Heart left ventricle (tissue), 16 donors: ENCODE measurements at regions of chr6 and their contacts with region 1.

Region 1: DNA sequence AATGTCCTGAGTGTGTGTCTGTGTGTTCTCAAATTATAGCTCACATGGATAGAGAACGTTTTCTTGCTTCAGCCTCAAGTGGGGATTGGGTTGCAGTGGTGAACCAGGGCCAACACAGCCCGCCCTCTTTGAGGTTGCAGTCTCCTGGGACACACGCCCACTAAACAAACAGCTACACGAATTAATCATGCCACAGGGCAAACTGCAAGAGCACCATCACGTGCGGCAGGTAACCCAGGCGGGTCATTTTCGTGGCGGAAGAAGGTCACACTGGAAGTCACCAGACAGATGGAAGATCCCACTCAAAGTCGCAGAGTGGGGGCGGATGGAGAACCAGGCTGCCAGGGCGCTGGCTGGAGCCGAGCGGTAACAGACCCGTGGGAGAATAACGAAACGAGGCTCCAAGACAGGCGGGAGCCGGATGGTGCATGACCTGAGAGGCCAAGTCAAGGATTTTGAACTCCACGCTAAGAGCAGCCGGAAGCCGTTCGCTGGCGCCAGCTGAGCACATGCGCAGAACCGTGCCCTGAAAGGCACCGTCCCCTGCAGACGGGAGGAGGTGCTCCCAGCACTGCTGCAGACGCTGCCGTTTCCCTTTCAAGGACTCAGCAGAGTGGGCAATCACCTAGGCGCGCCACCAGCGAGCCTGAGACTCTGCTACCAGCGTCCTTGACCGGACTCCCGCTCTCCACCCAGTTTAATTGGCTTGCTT is 10.7 kb downstream of the DLL1 start:
- DNase-seq: peak in 3 of 5 donors; percentile 74 to 81 (median 76)
- ATAC-seq: peak; percentile 32 to 75 (median 58)
- H3K4me3 ChIP-seq: peak overlapping the region in 8 of 12 donors; percentile 4 to 51 (median 32)
- H3K27ac ChIP-seq: peak overlapping the region in 8 of 12 donors; percentile 23 to 73 (median 58)
- H3K4me1 ChIP-seq: peaks cover 7 to 58% (median 34%) of the 10 kb centered on the region in 12 donors
- H3K27me3 ChIP-seq: no peaks in the 10 kb centered on the region
- CTCF ChIP-seq: peak in 1 of 12 donors; percentile 12
- POLR2A ChIP-seq: no peak

Region 2: GRCh38 chr6:170049641-170050561 is 230.2 kb before region 1 on chr6:
- intact Hi-C with region 1: loop called in 1 of 10 experiments (anchors 10 kb)
- DNase-seq: peak; percentile 70 to 94 (median 88)
- ATAC-seq: peak; percentile 83 to 91 (median 91)
- H3K4me3 ChIP-seq: no peak overlapping the region
- H3K27ac ChIP-seq: peak overlapping the region in 11 of 12 donors; percentile 10 to 88 (median 57)
- H3K4me1 ChIP-seq: peaks cover 0 to 36% (median 10%) of the 10 kb centered on the region in 12 donors
- H3K27me3 ChIP-seq: no peaks in the 10 kb centered on the region
- CTCF ChIP-seq: no peak
- POLR2A ChIP-seq: no peak

Region 3: GRCh38 chr6:170129691-170130171 is 150.4 kb before region 1 on chr6:
- intact Hi-C with region 1: loop called in 1 of 10 experiments (anchors 10 kb)
- DNase-seq: peak; percentile 69 to 94 (median 86)
- ATAC-seq: peak; percentile 89 to 93 (median 90)
- H3K4me3 ChIP-seq: no peak overlapping the region
- H3K27ac ChIP-seq: peak overlapping the region in 8 of 12 donors; percentile 34 to 72 (median 54)
- H3K4me1 ChIP-seq: peaks cover 0 to 53% (median 22%) of the 10 kb centered on the region in 12 donors
- H3K27me3 ChIP-seq: no peaks in the 10 kb centered on the region
- CTCF ChIP-seq: no peak
- POLR2A ChIP-seq: no peak

Region 4: DNA sequence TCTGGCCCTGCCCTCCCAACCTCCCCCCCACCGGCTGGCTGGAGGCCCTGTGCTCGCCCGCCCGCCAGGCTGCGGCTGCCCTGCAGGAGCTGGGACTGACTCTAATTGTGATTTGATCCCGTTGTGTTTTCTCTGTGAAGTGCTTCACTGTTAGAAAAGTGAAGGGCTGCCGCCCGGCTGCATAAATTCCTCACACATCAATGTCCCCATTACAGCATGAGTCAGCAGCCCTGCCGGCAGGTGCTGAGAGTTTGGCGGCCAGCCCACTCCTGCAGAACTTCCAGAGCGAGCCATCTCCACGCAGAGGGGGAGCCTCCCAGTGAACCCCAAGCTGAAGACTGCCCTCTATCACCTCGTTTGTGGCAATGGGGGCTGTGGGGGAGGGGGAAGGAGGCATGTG is 127.1 kb before region 1 on chr6:
- intact Hi-C with region 1: loop called in 4 of 10 experiments (anchors 5 to 10 kb)
- DNase-seq: peak in 3 of 5 donors; percentile 54 to 71 (median 62)
- ATAC-seq: peak in 2 of 4 donors; percentile 36 to 59
- H3K4me3 ChIP-seq: peak overlapping the region in 3 of 12 donors; percentile 20 to 41 (median 34)
- H3K27ac ChIP-seq: peak overlapping the region; percentile 73 to 93 (median 84)
- H3K4me1 ChIP-seq: peaks cover 0 to 36% (median 25%) of the 10 kb centered on the region in 12 donors
- H3K27me3 ChIP-seq: peaks cover 0 to 4% (median 0%) of the 10 kb centered on the region in 9 donors
- CTCF ChIP-seq: no peak
- POLR2A ChIP-seq: no peak

Region 5: GRCh38 chr6:170165072-170165463 is 115.1 kb before region 1 on chr6:
- intact Hi-C with region 1: loop called in 2 of 10 experiments (anchors 5 to 10 kb)
- DNase-seq: peak; percentile 63 to 79 (median 69)
- ATAC-seq: peak; percentile 29 to 85 (median 70)
- H3K4me3 ChIP-seq: no peak overlapping the region
- H3K27ac ChIP-seq: peak overlapping the region in 9 of 12 donors; percentile 14 to 72 (median 59)
- H3K4me1 ChIP-seq: peaks cover 0 to 34% (median 23%) of the 10 kb centered on the region in 12 donors
- H3K27me3 ChIP-seq: no peaks in the 10 kb centered on the region
- CTCF ChIP-seq: peak in 10 of 12 donors; percentile 16 to 48 (median 30)
- POLR2A ChIP-seq: no peak